ENCODE measurements at regions of chr4 and their contacts with region 1.

Region 1: GRCh38 chr4:118270492-118270891 is 82.3 kb downstream of the PRSS12 start:
- DNase-seq: no peak
- ATAC-seq: peak; percentile 30
- H3K4me3 Mint-ChIP-seq: no peak overlapping the region
- H3K27ac Mint-ChIP-seq: no peak overlapping the region
- H3K4me1 Mint-ChIP-seq: no peaks in the 10 kb centered on the region
- H3K27me3 Mint-ChIP-seq: peaks cover 2% of the 10 kb centered on the region

Region 2: DNA sequence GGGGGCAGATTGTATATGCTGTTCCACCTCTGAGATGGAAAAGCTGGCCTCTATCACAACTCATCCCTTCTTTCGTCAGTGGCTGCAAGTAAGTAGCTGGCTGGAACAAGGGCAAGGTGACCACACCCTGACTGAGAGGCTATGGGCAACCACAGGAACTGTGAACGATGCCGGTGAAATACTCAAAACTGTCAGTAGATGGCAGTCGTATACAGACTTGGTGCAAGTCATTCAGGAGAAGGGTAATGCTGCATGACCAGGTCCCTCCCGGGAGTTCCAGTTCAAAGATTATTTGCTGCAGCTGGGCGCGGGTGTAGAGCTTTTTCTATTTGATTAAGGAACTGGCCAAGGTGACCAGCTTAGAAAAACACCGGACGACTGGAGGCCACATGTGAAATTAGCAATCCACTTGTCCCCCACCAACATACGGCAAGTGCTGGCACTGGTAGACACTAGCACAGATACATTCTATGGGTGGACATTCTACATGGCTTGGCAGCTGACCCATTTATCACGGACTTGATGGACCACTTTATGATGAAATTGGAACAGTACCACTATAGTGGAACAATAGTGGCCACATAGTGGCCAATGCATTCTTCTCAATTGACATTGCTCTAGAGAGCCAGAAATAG is 1911.8 kb before region 1 on chr4:
- CTCF ChIA-PET with region 1: no interaction called
- POLR2A ChIA-PET with region 1: no interaction called
- intact Hi-C with region 1: loop called in 1 of 2 experiments (anchors 1 kb)
- DNase-seq: peak; percentile 64
- ATAC-seq: peak; percentile 69
- H3K4me3 Mint-ChIP-seq: no peak overlapping the region
- H3K27ac Mint-ChIP-seq: no peak overlapping the region
- H3K4me1 Mint-ChIP-seq: no peaks in the 10 kb centered on the region
- H3K27me3 Mint-ChIP-seq: no peaks in the 10 kb centered on the region

Region 3: GRCh38 chr4:117447925-117448324 is 822.6 kb before region 1 on chr4:
- CTCF ChIA-PET with region 1: no interaction called
- POLR2A ChIA-PET with region 1: no interaction called
- intact Hi-C with region 1: loop called in 1 of 2 experiments (anchors 2 kb)
- DNase-seq: peak; percentile 60
- ATAC-seq: peak; percentile 33
- H3K4me3 Mint-ChIP-seq: no peak overlapping the region
- H3K27ac Mint-ChIP-seq: no peak overlapping the region
- H3K4me1 Mint-ChIP-seq: no peaks in the 10 kb centered on the region
- H3K27me3 Mint-ChIP-seq: peaks cover 2% of the 10 kb centered on the region

Region 4: GRCh38 chr4:117740736-117741135 is 529.8 kb before region 1 on chr4:
- CTCF ChIA-PET with region 1: no interaction called
- POLR2A ChIA-PET with region 1: no interaction called
- intact Hi-C with region 1: no loop called
- DNase-seq: no peak
- ATAC-seq: no peak
- H3K4me3 Mint-ChIP-seq: no peak overlapping the region
- H3K27ac Mint-ChIP-seq: no peak overlapping the region
- H3K4me1 Mint-ChIP-seq: no peaks in the 10 kb centered on the region
- H3K27me3 Mint-ChIP-seq: peaks cover 2% of the 10 kb centered on the region

Region 5: DNA sequence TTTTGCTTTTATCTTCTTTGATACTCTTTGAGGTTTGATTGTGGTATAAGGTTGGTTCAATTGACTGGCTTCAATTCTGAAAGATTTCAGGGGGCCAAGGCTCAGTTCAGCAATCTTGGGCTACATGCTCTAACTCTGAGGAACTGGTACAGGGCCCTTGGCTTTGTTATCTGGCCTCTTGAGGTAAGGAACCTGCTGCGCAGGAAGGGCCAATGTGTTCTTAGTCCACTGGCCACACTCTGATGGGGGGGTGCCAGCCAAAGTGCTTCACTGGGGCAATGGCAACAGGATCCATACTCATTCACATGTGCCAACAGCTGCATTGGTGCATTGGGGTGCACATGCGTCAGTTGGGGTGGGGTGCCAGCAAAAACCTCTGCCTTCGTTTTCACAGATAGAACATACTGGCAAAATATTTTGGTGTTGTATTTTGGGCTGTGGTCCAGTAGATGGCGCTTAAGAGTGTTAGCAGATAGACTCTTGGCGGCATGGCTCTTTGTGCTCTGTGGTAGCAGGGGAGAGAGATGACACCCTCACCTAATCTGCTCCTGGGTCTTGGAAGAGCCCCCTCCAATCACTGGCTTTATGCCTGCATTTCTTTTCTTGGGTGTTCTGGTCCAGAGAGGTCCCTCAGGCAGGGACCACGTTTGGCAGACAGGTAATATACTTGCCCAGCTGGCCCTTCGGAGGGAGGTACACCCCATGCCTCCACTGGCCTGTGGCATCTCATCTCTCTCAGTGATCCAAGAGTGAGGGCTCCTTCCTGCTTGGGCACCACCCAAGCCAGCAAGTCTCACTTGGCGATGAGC is 193.3 kb before region 1 on chr4:
- CTCF ChIA-PET with region 1: no interaction called
- POLR2A ChIA-PET with region 1: no interaction called
- intact Hi-C with region 1: loop called (anchors 1 to 5 kb)
- DNase-seq: peak; percentile 48
- ATAC-seq: peak; percentile 74
- H3K4me3 Mint-ChIP-seq: no peak overlapping the region
- H3K27ac Mint-ChIP-seq: no peak overlapping the region
- H3K4me1 Mint-ChIP-seq: no peaks in the 10 kb centered on the region
- H3K27me3 Mint-ChIP-seq: peaks cover 4% of the 10 kb centered on the region

Region 6: DNA sequence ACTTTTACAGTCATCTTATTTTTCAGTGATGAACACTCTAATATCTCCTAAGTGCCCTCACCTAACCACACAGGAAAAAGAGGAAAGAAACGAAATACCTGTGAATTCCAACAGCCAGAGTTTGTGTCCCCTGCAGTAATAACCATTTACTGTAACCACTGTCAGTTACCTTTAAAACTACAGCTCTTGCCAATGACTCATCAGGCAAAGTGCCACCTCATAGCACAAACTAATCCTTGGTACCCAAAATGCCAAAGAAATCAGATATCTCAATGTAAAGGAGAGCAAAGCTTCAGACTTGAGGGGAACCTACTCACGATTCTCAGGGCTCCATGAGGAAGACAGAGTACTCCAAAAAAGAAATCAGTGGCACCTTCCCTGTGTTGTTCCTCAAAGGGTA is 89.7 kb before region 1 on chr4:
- CTCF ChIA-PET with region 1: no interaction called
- POLR2A ChIA-PET with region 1: no interaction called
- intact Hi-C with region 1: no loop called
- DNase-seq: no peak
- ATAC-seq: peak; percentile 49
- H3K4me3 Mint-ChIP-seq: no peak overlapping the region
- H3K27ac Mint-ChIP-seq: no peak overlapping the region
- H3K4me1 Mint-ChIP-seq: no peaks in the 10 kb centered on the region
- H3K27me3 Mint-ChIP-seq: peaks cover 4% of the 10 kb centered on the region

Region 7: GRCh38 chr4:118260309-118260708 is 10.2 kb before region 1 on chr4:
- CTCF ChIA-PET with region 1: interaction called, 33 read pairs
- POLR2A ChIA-PET with region 1: no interaction called
- intact Hi-C with region 1: no loop called
- DNase-seq: no peak
- ATAC-seq: no peak
- H3K4me3 Mint-ChIP-seq: no peak overlapping the region
- H3K27ac Mint-ChIP-seq: no peak overlapping the region
- H3K4me1 Mint-ChIP-seq: no peaks in the 10 kb centered on the region
- H3K27me3 Mint-ChIP-seq: peaks cover 3% of the 10 kb centered on the region

Region 8: GRCh38 chr4:118335324-118335723 is 64.8 kb after region 1 on chr4:
- CTCF ChIA-PET with region 1: no interaction called
- POLR2A ChIA-PET with region 1: no interaction called
- intact Hi-C with region 1: no loop called
- DNase-seq: no peak
- ATAC-seq: no peak
- H3K4me3 Mint-ChIP-seq: no peak overlapping the region
- H3K27ac Mint-ChIP-seq: no peak overlapping the region
- H3K4me1 Mint-ChIP-seq: no peaks in the 10 kb centered on the region
- H3K27me3 Mint-ChIP-seq: peaks cover 2% of the 10 kb centered on the region

Region 9: DNA sequence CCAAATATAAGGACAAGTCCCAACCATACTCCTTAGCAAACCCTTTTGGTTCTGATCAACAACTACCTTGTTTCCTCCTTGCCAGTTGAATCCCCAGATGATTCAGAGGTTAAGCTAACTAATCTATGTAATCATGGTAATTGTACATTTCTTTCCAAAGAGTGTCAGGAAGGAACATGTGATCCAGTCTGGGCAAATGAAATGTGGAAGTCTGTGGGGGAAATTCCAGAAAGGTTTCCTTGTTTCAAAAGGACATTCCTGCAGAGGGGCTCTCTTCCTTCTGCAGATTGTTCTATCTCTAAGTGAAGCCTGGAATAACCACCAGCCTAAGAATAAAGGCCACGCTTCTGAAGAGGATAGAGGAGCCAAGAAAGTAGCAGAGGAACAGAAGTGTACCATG is 75.3 kb after region 1 on chr4:
- CTCF ChIA-PET with region 1: no interaction called
- POLR2A ChIA-PET with region 1: no interaction called
- intact Hi-C with region 1: no loop called
- DNase-seq: no peak
- ATAC-seq: no peak
- H3K4me3 Mint-ChIP-seq: no peak overlapping the region
- H3K27ac Mint-ChIP-seq: no peak overlapping the region
- H3K4me1 Mint-ChIP-seq: no peaks in the 10 kb centered on the region
- H3K27me3 Mint-ChIP-seq: peaks cover 23% of the 10 kb centered on the region